Activated CD4-positive, alpha-beta T cell treated with anti-CD3 and anti-CD28 coated beads, Interleukin-2, amount 10 ng/mL, durations not matched to agents 24 days and 14 days (primary cell): ENCODE measurements at regions of chr11 and their contacts with region 1.

Region 1: DNA sequence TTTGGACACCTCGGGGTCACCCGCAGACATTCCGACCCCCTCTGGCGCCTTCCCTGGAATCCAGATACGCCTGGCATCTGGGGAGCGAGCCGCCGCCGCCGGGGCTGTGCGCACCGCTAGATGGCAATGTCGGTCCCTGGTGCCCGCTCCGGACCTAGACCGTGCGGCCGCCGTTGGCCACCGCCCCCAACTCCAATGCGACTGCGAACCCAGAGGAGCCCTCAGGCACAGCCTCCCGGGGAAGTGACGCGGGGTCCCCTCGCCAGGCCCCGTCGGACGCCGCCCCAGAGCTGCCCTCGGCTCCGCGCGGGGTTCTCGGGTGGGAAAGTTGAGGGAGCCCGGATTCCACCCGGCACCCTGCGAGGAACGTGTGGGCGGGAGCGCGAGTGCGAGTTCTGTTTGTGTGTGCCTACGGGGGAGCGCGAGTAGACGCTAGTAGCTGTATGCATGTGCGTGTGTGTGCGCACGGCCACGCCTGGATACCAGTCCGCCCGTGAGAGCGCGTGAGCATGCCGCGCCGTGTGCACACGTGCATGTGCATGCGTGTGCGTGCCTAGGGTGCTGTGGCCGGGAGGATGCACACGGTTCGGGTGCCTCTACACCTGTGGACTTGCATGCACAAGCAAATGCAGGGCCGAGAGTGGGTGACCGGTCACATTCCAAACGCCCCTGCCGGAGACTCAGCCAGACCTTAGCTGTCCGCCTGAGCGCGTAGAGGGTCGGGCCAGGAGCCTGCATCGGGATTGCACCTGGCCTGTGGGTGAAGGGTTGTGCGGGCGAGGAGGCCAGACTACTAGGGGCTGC is 1.9 kb downstream of the CHRM4 start:
- DNase-seq: peak; percentile 88
- H3K4me3 Mint-ChIP-seq: peak overlapping the region; percentile 72
- H3K27ac Mint-ChIP-seq: peak overlapping the region; percentile 17
- H3K4me1 Mint-ChIP-seq: peaks cover 26% of the 10 kb centered on the region
- H3K27me3 Mint-ChIP-seq: peaks cover 62% of the 10 kb centered on the region

Region 2: GRCh38 chr11:46346886-46347636 is 42.6 kb before region 1 on chr11 and contains the start of gene DGKZ:
- intact Hi-C with region 1: loop called (anchors 2 kb)
- DNase-seq: peak; percentile 98
- H3K4me3 Mint-ChIP-seq: peak within 1 kb of the TSS; percentile 88
- H3K27ac Mint-ChIP-seq: peak within 1 kb of the TSS; percentile 91
- H3K4me1 Mint-ChIP-seq: peaks cover 73% of the 10 kb centered on the region
- H3K27me3 Mint-ChIP-seq: no peaks in the 10 kb centered on the region
- total RNA-seq, gene DGKZ: 87.4 and 94.7 TPM in 2 replicates

Region 3: GRCh38 chr11:46413757-46414465 is 24.3 kb after region 1 on chr11:
- intact Hi-C with region 1: no loop called
- DNase-seq: no peak
- H3K4me3 Mint-ChIP-seq: no peak overlapping the region
- H3K27ac Mint-ChIP-seq: no peak overlapping the region
- H3K4me1 Mint-ChIP-seq: peaks cover 8% of the 10 kb centered on the region
- H3K27me3 Mint-ChIP-seq: no peaks in the 10 kb centered on the region

Region 4: DNA sequence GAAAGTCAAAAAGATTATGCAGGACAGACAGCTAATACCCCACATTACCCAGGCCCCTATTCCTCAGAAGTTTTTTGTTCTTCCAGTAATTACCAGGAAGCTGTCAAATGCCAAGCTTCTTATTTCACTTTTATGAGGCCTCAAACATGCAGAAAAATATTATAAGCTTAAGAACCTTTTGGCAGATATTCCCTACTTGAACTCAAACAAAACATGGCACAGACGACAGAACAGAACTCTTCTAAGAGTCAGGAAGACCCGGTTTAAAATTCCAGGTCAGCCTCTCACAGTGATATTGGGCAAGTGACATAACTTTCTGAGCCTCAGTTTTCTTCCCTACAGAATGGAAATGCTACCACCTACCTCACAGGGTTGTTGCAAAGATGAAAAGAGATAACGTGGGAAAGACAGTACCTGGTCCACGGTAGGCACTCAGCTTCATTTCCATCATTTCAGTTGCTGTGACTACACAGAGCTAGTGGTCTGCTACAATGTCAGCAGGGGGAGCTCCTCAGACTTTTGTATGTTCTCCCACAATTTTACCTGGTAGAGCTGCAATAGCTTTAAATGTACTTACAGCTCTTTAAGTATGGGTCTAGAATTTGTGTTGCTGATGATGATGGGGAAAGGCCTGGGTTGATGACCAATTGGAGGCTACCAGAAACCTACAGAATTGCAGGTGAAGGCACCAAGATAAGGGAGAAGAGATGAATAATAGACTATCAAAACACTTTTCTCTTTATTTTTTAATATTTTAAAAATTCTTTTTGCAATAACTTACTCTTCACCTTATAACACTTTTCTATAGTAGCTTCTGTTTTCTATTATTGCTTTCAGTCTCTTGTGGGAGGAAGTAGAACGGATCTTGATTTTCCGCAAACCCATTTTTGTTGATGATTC is 100.3 kb after region 1 on chr11:
- intact Hi-C with region 1: no loop called
- DNase-seq: peak; percentile 79
- H3K4me3 Mint-ChIP-seq: no peak overlapping the region
- H3K27ac Mint-ChIP-seq: no peak overlapping the region
- H3K4me1 Mint-ChIP-seq: peaks cover 9% of the 10 kb centered on the region
- H3K27me3 Mint-ChIP-seq: no peaks in the 10 kb centered on the region

Region 5: GRCh38 chr11:46529095-46529905 is 139.6 kb after region 1 on chr11:
- intact Hi-C with region 1: loop called (anchors 1 kb)
- DNase-seq: peak; percentile 91
- H3K4me3 Mint-ChIP-seq: no peak overlapping the region
- H3K27ac Mint-ChIP-seq: no peak overlapping the region
- H3K4me1 Mint-ChIP-seq: peaks cover 16% of the 10 kb centered on the region
- H3K27me3 Mint-ChIP-seq: no peaks in the 10 kb centered on the region

Region 6: GRCh38 chr11:46537537-46538295 is 148.1 kb after region 1 on chr11:
- intact Hi-C with region 1: loop called (anchors 1 kb)
- DNase-seq: peak; percentile 89
- H3K4me3 Mint-ChIP-seq: no peak overlapping the region
- H3K27ac Mint-ChIP-seq: no peak overlapping the region
- H3K4me1 Mint-ChIP-seq: peaks cover 5% of the 10 kb centered on the region
- H3K27me3 Mint-ChIP-seq: no peaks in the 10 kb centered on the region